Left cardiac atrium (tissue), 4 donors: ENCODE measurements at regions of chr7 and their contacts with region 1.

Region 1: GRCh38 chr7:141659501-141659900 is 42.5 kb downstream of the DENND11 start:
- DNase-seq: no peak
- ATAC-seq: no peak

Region 2: DNA sequence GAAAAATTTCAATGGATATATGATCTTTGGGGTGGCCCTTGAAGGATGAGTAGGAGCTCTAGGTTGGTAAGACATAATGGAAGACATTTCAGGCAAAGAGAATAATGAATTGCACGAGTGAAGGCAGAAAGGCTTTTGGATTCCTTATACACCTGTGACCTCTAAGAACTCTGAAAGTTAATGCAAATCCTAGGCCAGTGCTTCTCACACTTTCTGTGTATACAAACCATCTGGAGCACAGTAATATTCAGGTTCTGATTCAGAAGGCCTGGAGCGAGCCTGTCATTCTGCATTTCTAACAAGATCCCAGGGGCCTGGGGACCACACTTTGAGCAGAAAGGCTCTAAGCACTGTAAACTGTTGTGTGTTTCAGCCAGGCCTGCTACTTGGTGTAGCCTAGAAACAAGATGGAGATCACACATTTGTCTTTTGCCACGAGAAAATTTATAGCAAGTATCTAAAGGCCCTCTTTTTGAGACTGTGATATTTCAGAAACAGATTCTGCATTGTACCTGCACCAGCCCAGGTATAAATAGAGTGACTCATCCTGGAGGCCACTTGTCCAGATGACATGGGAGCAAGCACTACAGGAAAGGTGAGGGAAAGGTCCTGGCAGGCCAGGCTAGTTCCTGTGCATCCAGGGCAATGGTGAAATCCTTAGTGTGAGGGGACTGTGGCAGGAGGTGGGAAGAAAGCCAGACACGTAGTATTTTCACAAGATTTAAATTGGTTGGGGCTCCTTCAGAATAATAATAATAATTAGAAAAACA is 669.1 kb before region 1 on chr7:
- intact Hi-C with region 1: no loop called
- DNase-seq: no peak
- ATAC-seq: no peak

Region 3: GRCh38 chr7:141737834-141738591 is 78.5 kb after region 1 on chr7 and contains the start of gene SSBP1:
- intact Hi-C with region 1: loop called in 1 of 2 experiments (anchors 5 kb)
- DNase-seq: peak; percentile 90
- ATAC-seq: peak; percentile 98
- total RNA-seq, gene SSBP1: 80.6 to 109 TPM

Region 4: GRCh38 chr7:141837683-141838082 is 178.2 kb after region 1 on chr7:
- intact Hi-C with region 1: no loop called
- DNase-seq: no peak
- ATAC-seq: no peak